HEK293T (cell line): ENCODE measurements at regions of chr5 and their contacts with region 1.

Region 1: GRCh38 chr5:137778772-137779564 is 24.8 kb upstream of the HNRNPA0 start:
- DNase-seq: peak; percentile 34

Region 2: DNA sequence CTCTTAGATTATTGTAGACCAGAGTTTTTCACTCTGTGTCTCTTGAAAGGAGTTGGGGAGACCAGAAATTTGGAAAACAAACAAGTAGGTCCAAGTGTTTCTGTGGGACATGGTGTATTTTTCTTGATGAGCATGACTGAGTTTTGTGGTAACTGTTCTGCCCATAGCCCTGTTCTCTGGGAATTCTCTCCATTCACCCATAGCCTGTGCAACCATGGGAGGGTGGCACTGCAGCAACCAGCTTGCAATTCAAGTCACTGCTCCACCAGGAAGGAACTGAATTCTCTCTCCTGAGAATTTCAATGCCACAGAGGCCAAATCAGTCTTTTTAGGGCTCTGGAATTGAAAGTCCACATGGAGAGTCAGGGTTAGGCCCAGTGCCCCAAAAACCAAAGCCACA is 938.4 kb before region 1 on chr5:
- CTCF ChIA-PET with region 1: no interaction called
- POLR2A ChIA-PET with region 1: no interaction called
- DNase-seq: no peak

Region 3: GRCh38 chr5:137754126-137754960 is 24.6 kb before region 1 on chr5 and contains the start of gene HNRNPA0:
- CTCF ChIA-PET with region 1: interaction called, 6 read pairs
- POLR2A ChIA-PET with region 1: interaction called, 10 read pairs
- DNase-seq: peak; percentile 94

Region 4: GRCh38 chr5:137822158-137822764 is 43.3 kb after region 1 on chr5:
- CTCF ChIA-PET with region 1: interaction called, 18 read pairs
- POLR2A ChIA-PET with region 1: no interaction called
- DNase-seq: peak; percentile 65

Region 5: DNA sequence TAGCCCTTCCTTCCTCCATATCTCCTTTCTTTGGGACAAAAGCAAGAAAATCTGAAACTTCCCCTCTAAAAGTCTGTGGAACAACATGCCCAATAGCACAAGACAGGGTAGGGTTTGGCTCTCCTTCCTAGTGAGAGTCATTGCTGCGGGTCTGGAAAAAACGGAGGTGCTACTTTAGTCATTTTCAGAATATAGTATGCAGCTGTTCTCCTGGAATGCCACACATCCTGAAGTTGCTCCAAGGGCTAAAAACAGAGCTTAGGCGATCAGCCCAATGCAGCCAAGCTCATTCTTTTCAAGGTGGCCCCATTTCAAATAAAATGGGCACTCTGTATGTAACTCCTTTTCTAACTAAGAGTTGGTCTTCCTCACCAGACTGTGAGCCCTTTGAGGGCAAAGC is 49.2 kb after region 1 on chr5:
- CTCF ChIA-PET with region 1: interaction called, 18 read pairs
- POLR2A ChIA-PET with region 1: no interaction called
- DNase-seq: no peak

Region 6: DNA sequence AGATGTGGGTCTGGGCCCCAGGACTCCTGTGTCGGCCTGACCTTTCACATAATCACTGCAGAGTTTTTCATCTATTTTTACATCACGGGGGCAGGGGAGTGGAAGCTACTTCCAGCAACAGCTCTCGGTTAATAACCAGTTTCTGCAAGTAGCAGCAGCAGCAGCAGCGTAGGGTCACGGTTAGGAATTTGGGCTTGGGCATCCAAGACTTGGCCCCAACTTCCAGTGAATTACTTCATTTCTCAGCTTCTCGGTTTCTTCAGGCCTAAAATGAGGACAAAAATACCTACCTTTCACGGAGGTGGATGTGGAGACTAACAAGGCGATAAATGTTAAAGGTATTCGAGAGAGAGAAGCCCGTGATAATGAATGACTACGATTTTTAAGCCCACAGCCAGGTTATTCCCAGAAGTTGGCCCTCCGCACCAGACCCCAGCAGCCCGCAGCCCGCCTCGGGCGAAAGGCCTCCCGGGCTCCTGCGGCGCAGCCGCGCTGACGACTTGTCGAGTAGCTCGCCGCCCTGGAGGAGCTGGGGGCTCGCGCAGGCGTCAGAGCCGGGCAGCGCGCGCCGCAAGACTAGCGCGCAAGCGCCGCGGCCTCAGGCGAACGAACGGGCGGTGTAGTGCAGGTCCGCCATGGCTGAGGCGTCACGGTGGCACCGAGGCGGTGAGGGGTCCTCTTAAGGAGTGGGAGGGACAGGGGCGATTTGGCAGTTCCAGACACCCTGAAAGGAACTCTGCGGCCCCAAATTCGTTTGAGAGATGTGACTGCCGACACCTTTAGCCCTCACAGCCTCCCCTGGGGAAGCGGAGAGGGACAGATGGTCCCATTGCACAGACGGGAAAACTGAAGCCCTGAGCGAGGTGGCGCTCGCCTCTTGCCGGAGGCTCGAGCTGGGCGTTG is 110.1 kb after region 1 on chr5 and contains the start of gene PKD2L2:
- CTCF ChIA-PET with region 1: interaction called, 6 read pairs
- POLR2A ChIA-PET with region 1: interaction called, 10 read pairs
- DNase-seq: peak; percentile 89